RWPE1 (cell line): ENCODE measurements at regions of chr5 and their contacts with region 1.

Region 1: GRCh38 chr5:132820162-132820754 is 7.2 kb downstream of the SOWAHA start:
- DNase-seq: peak; percentile 88
- H3K27ac ChIP-seq: no peak overlapping the region
- CTCF ChIP-seq: peak; percentile 93

Region 2: GRCh38 chr5:132540764-132541163 is 279.5 kb before region 1 on chr5:
- CTCF ChIA-PET with region 1: no interaction called
- POLR2A ChIA-PET with region 1: no interaction called
- DNase-seq: no peak
- H3K27ac ChIP-seq: no peak overlapping the region
- CTCF ChIP-seq: no peak

Region 3: GRCh38 chr5:132753135-132753987 is 66.9 kb before region 1 on chr5:
- CTCF ChIA-PET with region 1: interaction called, 21 read pairs
- POLR2A ChIA-PET with region 1: interaction called, 3 read pairs
- DNase-seq: no peak
- H3K27ac ChIP-seq: no peak overlapping the region
- CTCF ChIP-seq: no peak

Region 4: GRCh38 chr5:132775476-132775961 is 44.7 kb before region 1 on chr5:
- CTCF ChIA-PET with region 1: interaction called, 10 read pairs
- POLR2A ChIA-PET with region 1: interaction called, 9 read pairs
- DNase-seq: no peak
- H3K27ac ChIP-seq: no peak overlapping the region
- CTCF ChIP-seq: no peak

Region 5: GRCh38 chr5:132797651-132798050 is 22.6 kb before region 1 on chr5:
- CTCF ChIA-PET with region 1: interaction called, 16 read pairs
- POLR2A ChIA-PET with region 1: no interaction called
- DNase-seq: no peak
- H3K27ac ChIP-seq: no peak overlapping the region
- CTCF ChIP-seq: no peak

Region 6: DNA sequence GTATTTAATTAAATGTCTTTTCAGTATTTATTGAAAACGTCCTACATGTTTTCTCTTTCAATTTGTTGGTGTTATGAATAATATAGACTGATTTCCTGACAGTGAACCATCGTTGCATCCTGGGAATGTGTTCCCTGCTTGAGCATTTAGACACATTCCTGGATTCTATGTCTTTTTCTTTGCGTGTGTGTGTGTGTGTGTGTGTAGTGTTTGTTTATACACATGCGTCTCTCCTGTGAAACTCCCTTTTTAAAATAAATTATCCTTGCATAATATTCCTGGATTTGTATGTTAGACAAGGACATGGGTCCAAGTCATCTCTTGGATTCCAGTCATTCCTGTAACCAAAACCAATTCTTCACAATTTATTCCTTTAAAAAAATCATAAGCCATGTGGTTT is 384.9 kb after region 1 on chr5:
- CTCF ChIA-PET with region 1: no interaction called
- POLR2A ChIA-PET with region 1: no interaction called
- DNase-seq: no peak
- H3K27ac ChIP-seq: no peak overlapping the region
- CTCF ChIP-seq: no peak